Prostate gland (tissue), 2 donors: ENCODE measurements at regions of chr2 and their contacts with region 1.

Region 1: DNA sequence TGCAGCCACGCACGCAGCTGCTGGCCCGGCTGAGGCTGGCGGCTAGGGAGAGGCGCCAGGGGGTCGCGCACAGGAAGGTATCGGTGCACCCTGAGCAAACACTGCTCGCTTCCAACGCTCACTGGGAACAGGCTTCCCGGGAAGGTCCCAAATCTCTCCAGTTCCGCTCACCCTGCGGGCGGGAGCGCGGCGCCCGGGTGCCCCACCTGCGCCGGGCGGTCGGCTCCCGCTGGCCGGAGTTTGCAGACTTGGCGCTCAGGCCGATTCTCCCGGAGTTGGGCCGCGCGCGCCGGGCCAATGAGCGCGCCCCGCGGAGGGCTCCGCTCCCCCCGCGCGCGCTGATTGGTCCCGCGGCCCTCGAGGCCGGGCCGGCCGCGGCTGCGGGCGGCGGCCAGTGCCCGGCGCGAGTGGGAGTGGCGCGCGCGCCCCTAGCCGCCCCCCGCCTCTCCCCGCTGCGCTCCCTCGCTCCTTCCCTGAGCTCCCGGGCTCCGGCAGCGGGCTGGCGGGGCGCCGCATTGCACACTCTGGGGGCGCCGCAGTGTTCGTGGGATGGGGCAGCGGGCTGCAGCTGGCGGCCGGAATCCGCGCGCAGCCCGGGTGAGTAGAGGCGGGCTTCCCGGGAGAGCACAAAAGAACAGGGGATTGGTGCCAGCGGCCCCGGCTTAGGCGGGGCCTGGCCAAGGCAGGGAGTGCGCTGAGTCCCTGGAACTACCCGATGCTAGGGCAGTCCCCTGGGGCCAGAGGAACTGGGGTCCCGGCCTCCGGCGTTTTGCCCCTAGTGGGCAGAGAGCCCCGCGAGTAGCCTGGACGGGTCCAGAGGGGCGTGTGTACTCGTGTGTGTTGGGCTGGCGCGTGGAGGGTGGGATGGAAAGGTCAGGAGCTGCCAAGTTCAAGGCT is at the start of gene LYPD6:
- DNase-seq: peak; percentile 74
- H3K4me3 ChIP-seq: peak within 1 kb of the TSS; percentile 53 to 63
- H3K27ac ChIP-seq: peak within 1 kb of the TSS; percentile 48 to 64
- H3K4me1 ChIP-seq: no peaks in the 10 kb centered on the region
- H3K27me3 ChIP-seq: no peaks in the 10 kb centered on the region
- CTCF ChIP-seq: no peak
- POLR2A ChIP-seq: peak; percentile 46
- total RNA-seq, gene LYPD6: 2.3 to 5.1 TPM

Region 2: GRCh38 chr2:149225446-149225845 is 104.9 kb before region 1 on chr2:
- intact Hi-C with region 1: no loop called
- DNase-seq: no peak
- H3K4me3 ChIP-seq: no peak overlapping the region
- H3K27ac ChIP-seq: no peak overlapping the region
- H3K4me1 ChIP-seq: no peaks in the 10 kb centered on the region
- H3K27me3 ChIP-seq: no peaks in the 10 kb centered on the region
- CTCF ChIP-seq: no peak
- POLR2A ChIP-seq: no peak

Region 3: GRCh38 chr2:149561309-149561926 is 231.0 kb after region 1 on chr2:
- intact Hi-C with region 1: loop called (anchors 10 kb)
- DNase-seq: peak; percentile 28
- H3K4me3 ChIP-seq: no peak overlapping the region
- H3K27ac ChIP-seq: no peak overlapping the region
- H3K4me1 ChIP-seq: no peaks in the 10 kb centered on the region
- H3K27me3 ChIP-seq: no peaks in the 10 kb centered on the region
- CTCF ChIP-seq: peak; percentile 85 to 91 (median 89)
- POLR2A ChIP-seq: no peak

Region 4: GRCh38 chr2:149573760-149574159 is 243.4 kb after region 1 on chr2:
- intact Hi-C with region 1: loop called (anchors 10 kb)
- DNase-seq: no peak
- H3K4me3 ChIP-seq: no peak overlapping the region
- H3K27ac ChIP-seq: peak overlapping the region; percentile 70 to 81
- H3K4me1 ChIP-seq: peaks cover 8% of the 10 kb centered on the region
- H3K27me3 ChIP-seq: no peaks in the 10 kb centered on the region
- CTCF ChIP-seq: peak in 3 of 4 experiments; percentile 38 to 60 (median 44)
- POLR2A ChIP-seq: no peak